ENCODE measurements at regions of chr1 and their contacts with region 1.

Region 1: DNA sequence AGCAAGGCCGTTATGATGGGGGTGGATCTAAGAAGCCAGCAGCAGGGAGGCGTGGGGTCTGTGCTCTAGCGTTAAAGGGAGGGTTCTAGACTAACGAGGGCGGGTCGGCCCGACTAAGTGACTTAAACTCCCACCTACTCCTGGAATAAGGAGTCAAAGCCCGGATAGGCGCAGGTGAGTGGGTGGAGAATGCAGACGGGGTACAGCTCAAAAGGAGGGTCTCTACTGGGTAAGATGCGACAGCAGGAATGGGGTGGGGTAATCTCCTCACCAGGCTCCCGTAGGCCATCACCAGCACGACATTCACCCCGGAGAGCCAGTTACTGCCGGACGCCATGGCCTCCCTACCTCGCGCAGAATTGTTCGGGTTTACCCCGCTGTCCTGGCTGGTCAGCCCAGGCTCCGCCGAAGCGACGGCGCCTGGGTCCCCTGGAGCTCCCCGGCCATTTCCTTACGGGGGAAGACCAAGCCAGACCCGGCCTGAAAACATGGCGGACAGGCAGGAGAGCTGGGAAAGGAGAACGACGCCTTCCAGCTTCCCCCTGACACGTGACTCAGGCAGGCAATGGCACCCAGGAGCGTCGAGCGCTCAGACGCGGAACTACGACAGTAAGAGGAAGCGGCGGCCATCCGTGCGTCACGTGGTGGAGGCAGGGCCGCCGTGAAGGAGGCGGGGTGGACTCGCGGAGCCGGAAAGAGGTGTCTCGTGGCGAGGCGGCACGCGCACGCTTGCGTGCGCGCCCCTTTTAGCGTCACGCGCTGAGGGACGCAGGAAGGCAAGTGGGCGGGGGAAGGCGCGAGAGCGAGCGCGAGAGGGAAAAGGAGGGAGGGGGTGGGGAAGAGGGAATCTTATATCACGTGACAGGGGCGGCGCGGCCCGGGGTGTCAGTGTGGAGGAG is at the start of gene UBAP2L:
- DNase-seq: peak; percentile 97 to 100 (median 99)
- ATAC-seq: peak; percentile 82
- H3K4me3 ChIP-seq: peak within 1 kb of the TSS; percentile 68 to 93
- H3K4me3 Mint-ChIP-seq: peak within 1 kb of the TSS; percentile 95
- H3K27ac ChIP-seq: peak within 1 kb of the TSS; percentile 93 to 99
- H3K27ac Mint-ChIP-seq: peak within 1 kb of the TSS; percentile 99
- H3K4me1 ChIP-seq: peaks cover 54% of the 10 kb centered on the region
- H3K4me1 Mint-ChIP-seq: peaks cover 71% of the 10 kb centered on the region
- H3K27me3 ChIP-seq: no peaks in the 10 kb centered on the region
- H3K27me3 Mint-ChIP-seq: no peaks in the 10 kb centered on the region
- CTCF ChIP-seq: no peak
- total RNA-seq, gene UBAP2L: 212 to 226 TPM

Region 2: DNA sequence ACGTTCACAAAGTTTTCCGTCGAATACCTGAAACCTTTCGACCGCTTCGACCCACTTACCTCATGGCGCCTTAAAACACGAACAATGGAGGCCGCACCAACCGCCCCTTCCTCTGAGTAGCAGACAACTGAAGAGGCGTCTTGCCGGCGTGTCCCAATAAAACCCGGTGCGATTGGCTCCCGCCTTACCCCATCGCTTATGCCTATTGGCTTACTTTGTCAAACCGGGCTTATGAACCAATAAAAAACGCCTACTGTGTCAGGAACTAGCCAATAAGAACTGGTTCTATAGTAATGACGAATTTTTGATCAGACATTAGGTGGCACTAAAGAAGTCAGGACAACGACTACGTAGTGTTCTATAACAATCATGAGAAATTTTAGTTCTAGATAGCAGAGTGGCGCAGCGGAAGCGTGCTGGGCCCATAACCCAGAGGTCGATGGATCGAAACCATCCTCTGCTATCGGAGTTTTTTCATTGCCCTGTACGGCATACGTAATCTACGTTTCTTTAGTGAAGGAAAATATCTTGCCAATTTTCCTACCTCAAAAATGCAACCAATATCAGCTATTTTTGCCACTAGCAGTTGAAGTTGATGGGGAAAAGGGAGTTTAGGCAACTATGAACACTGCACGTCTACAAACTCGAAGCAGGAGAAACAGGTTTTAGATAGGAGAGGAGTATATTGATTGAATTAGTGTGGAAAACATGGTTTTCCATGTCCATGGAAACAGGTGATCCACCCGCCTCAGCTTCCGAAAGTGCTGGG is 549.3 kb before region 1 on chr1 and contains the start of gene ILF2:
- CTCF ChIA-PET with region 1: no interaction called
- POLR2A ChIA-PET with region 1: no interaction called
- intact Hi-C with region 1: loop called in 1 of 2 experiments (anchors 2 kb)
- DNase-seq: peak; percentile 89 to 99 (median 97)
- ATAC-seq: peak; percentile 87
- H3K4me3 ChIP-seq: peak within 1 kb of the TSS; percentile 76 to 81
- H3K4me3 Mint-ChIP-seq: no peak within 1 kb of the TSS
- H3K27ac ChIP-seq: peak within 1 kb of the TSS; percentile 89 to 94
- H3K27ac Mint-ChIP-seq: peak within 1 kb of the TSS; percentile 67
- H3K4me1 ChIP-seq: peaks cover 22% of the 10 kb centered on the region
- H3K4me1 Mint-ChIP-seq: peaks cover 20% of the 10 kb centered on the region
- H3K27me3 ChIP-seq: no peaks in the 10 kb centered on the region
- H3K27me3 Mint-ChIP-seq: peaks cover under 1% of the 10 kb centered on the region
- CTCF ChIP-seq: no peak
- total RNA-seq, gene ILF2: 150 to 156 TPM

Region 3: GRCh38 chr1:153977250-153978240 is 242.8 kb before region 1 on chr1 and contains the start of gene JTB:
- CTCF ChIA-PET with region 1: no interaction called
- POLR2A ChIA-PET with region 1: interaction called, 4 read pairs
- intact Hi-C with region 1: loop called in 1 of 2 experiments (anchors 5 kb)
- DNase-seq: peak; percentile 62 to 91 (median 86)
- ATAC-seq: peak; percentile 95
- H3K4me3 ChIP-seq: peak within 1 kb of the TSS; percentile 92 to 97
- H3K4me3 Mint-ChIP-seq: peak within 1 kb of the TSS; percentile 97
- H3K27ac ChIP-seq: peak within 1 kb of the TSS; percentile 74 to 77
- H3K27ac Mint-ChIP-seq: peak within 1 kb of the TSS; percentile 96
- H3K4me1 ChIP-seq: peaks cover 20% of the 10 kb centered on the region
- H3K4me1 Mint-ChIP-seq: peaks cover 35% of the 10 kb centered on the region
- H3K27me3 ChIP-seq: no peaks in the 10 kb centered on the region
- H3K27me3 Mint-ChIP-seq: no peaks in the 10 kb centered on the region
- CTCF ChIP-seq: no peak
- total RNA-seq, gene JTB: 90.4 to 91.1 TPM

Region 4: DNA sequence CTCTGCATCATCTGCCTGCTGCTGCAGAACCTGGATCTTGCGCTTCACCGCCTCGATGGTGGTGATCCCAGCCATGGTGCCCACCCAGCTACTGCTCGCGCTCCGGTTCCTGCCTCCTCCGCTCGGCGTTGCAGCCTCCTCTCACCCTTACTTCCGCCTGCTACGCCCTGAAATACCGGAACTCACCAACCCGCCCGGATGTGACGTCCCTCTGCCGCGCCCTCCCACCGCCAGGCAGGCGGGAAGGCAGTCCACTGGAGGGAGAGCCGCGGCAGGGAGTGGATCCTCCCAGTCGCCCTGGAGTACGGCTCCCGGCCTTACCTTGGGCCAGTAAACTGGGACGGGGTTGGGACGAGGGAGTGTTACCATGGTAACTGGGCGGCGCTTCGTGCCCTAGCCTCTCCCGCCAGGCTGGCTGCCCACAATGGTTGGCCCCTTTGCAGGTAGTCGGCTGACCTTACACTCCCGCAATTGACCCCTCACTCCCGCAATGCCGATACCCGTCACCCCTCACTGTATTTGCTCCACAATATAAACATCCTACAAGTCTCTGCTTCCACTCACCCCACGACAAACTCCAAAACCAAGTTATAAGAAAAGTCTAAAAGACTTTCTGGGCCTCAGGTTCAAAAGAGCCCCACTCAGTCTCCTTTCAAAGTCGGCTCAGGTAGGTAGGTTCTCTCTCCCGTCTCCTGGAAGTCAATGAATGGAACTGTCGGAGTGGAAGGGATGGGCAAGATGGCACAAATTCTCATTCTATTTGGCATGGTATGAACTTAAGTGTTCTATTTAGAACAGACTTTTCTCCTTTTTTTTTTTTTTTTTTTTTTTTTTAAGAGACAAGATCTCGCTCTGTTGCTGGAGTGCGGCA is 37.0 kb before region 1 on chr1:
- CTCF ChIA-PET with region 1: no interaction called
- POLR2A ChIA-PET with region 1: interaction called, 6 read pairs
- intact Hi-C with region 1: loop called (anchors 1 kb)
- DNase-seq: peak; percentile 86 to 96 (median 94)
- ATAC-seq: peak; percentile 75
- H3K4me3 ChIP-seq: peak overlapping the region; percentile 79 to 91
- H3K4me3 Mint-ChIP-seq: peak overlapping the region; percentile 100
- H3K27ac ChIP-seq: peak overlapping the region; percentile 95 to 97
- H3K27ac Mint-ChIP-seq: peak overlapping the region; percentile 95
- H3K4me1 ChIP-seq: peaks cover 42% of the 10 kb centered on the region
- H3K4me1 Mint-ChIP-seq: peaks cover 48% of the 10 kb centered on the region
- H3K27me3 ChIP-seq: no peaks in the 10 kb centered on the region
- H3K27me3 Mint-ChIP-seq: no peaks in the 10 kb centered on the region
- CTCF ChIP-seq: no peak

Region 5: GRCh38 chr1:154272217-154272998 is 52.1 kb after region 1 on chr1 and contains the start of gene HAX1:
- CTCF ChIA-PET with region 1: interaction called, 6 read pairs
- POLR2A ChIA-PET with region 1: interaction called, 5 read pairs
- intact Hi-C with region 1: loop called (anchors 1 kb)
- DNase-seq: peak; percentile 91 to 100 (median 94)
- ATAC-seq: peak; percentile 85
- H3K4me3 ChIP-seq: peak within 1 kb of the TSS; percentile 85 to 91
- H3K4me3 Mint-ChIP-seq: peak within 1 kb of the TSS; percentile 94
- H3K27ac ChIP-seq: peak within 1 kb of the TSS; percentile 88 to 92
- H3K27ac Mint-ChIP-seq: peak within 1 kb of the TSS; percentile 98
- H3K4me1 ChIP-seq: peaks cover 22% of the 10 kb centered on the region
- H3K4me1 Mint-ChIP-seq: peaks cover 38% of the 10 kb centered on the region
- H3K27me3 ChIP-seq: no peaks in the 10 kb centered on the region
- H3K27me3 Mint-ChIP-seq: no peaks in the 10 kb centered on the region
- CTCF ChIP-seq: peak; percentile 75
- total RNA-seq, gene HAX1: 56.8 to 58.4 TPM